ENCODE measurements at regions of chr19 and their contacts with region 1.

Region 1: DNA sequence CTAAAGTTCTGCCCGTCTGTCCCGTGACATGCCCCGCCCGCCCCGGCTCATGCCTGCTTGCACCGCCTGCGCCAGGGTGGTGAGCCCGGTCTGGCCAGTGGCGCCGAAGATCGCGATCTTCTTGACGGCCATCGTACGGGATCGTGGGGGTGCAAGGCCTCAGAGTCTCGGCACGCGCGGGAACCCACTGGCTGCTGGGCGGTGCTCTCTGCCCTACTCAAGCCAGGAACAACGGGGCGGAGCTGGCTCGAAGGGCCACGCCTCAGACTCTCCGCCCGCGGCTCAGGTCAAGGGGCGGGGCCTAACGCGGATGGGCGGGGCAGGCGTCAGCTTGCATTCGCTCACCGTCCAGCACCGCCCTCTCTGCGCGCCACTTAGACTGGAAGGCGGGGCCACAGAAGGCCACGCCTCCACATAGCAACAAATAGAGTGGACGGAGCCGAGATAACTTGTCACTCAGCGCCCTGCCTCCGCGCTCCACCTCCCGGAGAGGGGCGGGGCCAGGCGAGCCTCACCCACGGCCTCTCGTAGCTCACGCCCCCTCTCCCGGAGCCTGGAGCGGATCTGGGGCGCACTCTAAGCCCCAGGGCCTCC is at the start of gene BLVRB:
- DNase-seq: peak; percentile 100
- H3K4me3 Mint-ChIP-seq: peak within 1 kb of the TSS; percentile 84
- H3K27ac Mint-ChIP-seq: peak within 1 kb of the TSS; percentile 86
- H3K4me1 Mint-ChIP-seq: peaks cover 32% of the 10 kb centered on the region
- H3K27me3 Mint-ChIP-seq: peaks cover 34% of the 10 kb centered on the region

Region 2: GRCh38 chr19:40305403-40305802 is 160.3 kb before region 1 on chr19:
- CTCF ChIA-PET with region 1: interaction called, 11 read pairs
- DNase-seq: peak; percentile 88
- H3K4me3 Mint-ChIP-seq: no peak overlapping the region
- H3K27ac Mint-ChIP-seq: no peak overlapping the region
- H3K4me1 Mint-ChIP-seq: no peaks in the 10 kb centered on the region
- H3K27me3 Mint-ChIP-seq: no peaks in the 10 kb centered on the region

Region 3: DNA sequence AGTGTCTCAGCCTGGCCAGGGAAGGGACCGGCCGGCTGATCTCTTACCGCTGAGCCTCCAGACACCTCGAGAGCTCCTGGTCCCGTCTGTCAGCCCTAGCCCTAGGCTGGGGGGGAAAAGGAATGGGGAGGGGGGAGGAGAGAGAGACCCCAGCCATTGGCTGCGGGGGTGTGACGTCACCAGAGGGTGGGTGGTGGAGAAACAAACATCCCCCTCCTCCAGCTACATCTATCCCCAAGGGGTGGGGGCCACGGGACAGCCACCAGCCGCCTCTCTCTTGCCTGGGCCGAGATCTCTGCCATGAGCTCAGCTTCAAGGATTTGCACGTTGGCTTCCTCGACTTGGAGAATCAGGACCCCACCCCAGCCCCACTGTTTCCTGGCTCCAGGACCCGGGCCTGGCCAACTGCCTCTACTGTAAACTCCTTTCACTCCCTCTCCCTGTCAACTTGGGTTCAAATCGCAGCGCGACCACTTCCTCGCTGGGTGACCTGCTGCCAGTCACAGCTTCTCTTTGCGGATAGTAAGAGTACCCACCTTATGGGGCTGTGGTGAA is 52.3 kb before region 1 on chr19 and contains the start of gene PRX:
- CTCF ChIA-PET with region 1: interaction called, 12 read pairs
- DNase-seq: no peak
- H3K4me3 Mint-ChIP-seq: no peak within 1 kb of the TSS
- H3K27ac Mint-ChIP-seq: no peak within 1 kb of the TSS
- H3K4me1 Mint-ChIP-seq: peaks cover 24% of the 10 kb centered on the region
- H3K27me3 Mint-ChIP-seq: peaks cover 21% of the 10 kb centered on the region

Region 4: GRCh38 chr19:40420766-40421764 is 44.6 kb before region 1 on chr19:
- CTCF ChIA-PET with region 1: interaction called, 13 read pairs
- DNase-seq: peak; percentile 86
- H3K4me3 Mint-ChIP-seq: peak overlapping the region; percentile 81
- H3K27ac Mint-ChIP-seq: peak overlapping the region; percentile 95
- H3K4me1 Mint-ChIP-seq: peaks cover 59% of the 10 kb centered on the region
- H3K27me3 Mint-ChIP-seq: peaks cover 11% of the 10 kb centered on the region

Region 5: DNA sequence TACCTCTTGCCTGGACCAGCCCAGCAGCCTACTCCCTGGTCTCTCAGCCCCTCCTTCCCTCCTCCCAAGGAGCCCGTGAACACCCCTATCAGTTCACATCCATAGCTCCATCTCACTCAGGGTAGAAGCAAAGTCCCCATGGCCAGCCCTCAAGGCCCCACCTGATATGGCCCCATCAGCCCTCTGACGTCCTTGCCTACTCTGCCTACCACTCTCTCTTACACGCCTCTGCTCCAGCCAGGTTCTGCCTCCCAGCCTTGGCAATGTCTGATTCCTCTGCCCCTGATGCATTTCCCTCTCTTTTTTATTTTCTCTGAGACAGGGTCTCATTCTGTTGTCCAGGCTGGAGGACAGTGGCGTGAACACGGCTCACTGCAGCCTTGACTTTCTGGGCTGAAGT is 13.6 kb before region 1 on chr19:
- CTCF ChIA-PET with region 1: interaction called, 23 read pairs
- DNase-seq: no peak
- H3K4me3 Mint-ChIP-seq: no peak overlapping the region
- H3K27ac Mint-ChIP-seq: no peak overlapping the region
- H3K4me1 Mint-ChIP-seq: no peaks in the 10 kb centered on the region
- H3K27me3 Mint-ChIP-seq: no peaks in the 10 kb centered on the region

Region 6: GRCh38 chr19:40578442-40578908 is 112.8 kb after region 1 on chr19:
- CTCF ChIA-PET with region 1: no interaction called
- DNase-seq: no peak
- H3K4me3 Mint-ChIP-seq: peak overlapping the region; percentile 89
- H3K27ac Mint-ChIP-seq: no peak overlapping the region
- H3K4me1 Mint-ChIP-seq: peaks cover 25% of the 10 kb centered on the region
- H3K27me3 Mint-ChIP-seq: no peaks in the 10 kb centered on the region

Region 7: GRCh38 chr19:40702337-40703012 is 236.8 kb after region 1 on chr19:
- CTCF ChIA-PET with region 1: no interaction called
- DNase-seq: no peak
- H3K4me3 Mint-ChIP-seq: no peak overlapping the region
- H3K27ac Mint-ChIP-seq: no peak overlapping the region
- H3K4me1 Mint-ChIP-seq: no peaks in the 10 kb centered on the region
- H3K27me3 Mint-ChIP-seq: no peaks in the 10 kb centered on the region

Region 8: GRCh38 chr19:40740747-40741146 is 275.1 kb after region 1 on chr19:
- CTCF ChIA-PET with region 1: no interaction called
- DNase-seq: no peak
- H3K4me3 Mint-ChIP-seq: no peak overlapping the region
- H3K27ac Mint-ChIP-seq: no peak overlapping the region
- H3K4me1 Mint-ChIP-seq: no peaks in the 10 kb centered on the region
- H3K27me3 Mint-ChIP-seq: no peaks in the 10 kb centered on the region